Naive thymus-derived CD8-positive, alpha-beta T cell (primary cell): ENCODE measurements at regions of chr16 and their contacts with region 1.

Region 1: DNA sequence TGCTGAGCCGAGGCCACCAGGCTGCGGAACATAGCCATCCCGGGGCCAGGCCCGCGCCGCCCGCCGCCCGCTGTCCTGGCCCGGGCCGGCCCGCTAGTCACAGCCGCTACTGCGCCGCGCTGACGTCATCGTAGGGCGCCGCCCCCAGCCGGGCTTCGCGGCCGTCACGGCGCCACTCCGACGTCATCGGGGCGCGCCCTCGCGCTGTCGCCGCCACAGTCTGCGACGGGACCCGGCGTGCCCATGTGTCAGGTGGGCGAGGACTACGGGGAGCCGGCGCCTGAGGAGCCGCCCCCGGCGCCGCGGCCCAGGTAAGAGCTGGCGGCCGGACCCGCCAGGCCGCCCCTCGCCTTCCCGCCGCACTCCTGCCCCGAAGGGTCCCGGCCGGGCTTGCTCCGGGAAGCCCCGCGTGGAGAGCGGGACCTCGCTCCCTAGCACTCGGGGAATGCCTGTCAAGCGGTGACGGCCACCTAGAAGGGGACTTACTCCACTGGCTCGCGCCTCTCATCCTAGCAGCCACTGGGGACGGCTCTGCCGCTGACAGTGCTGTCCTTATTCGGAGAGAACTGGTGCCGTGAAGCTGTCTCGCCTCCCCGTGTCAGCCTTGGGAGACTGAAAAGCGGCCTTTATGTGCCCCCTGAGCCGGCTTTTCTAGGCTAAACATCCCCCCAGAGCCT is at the starts of genes CTU2 and RNF166:
- DNase-seq: peak; percentile 86 to 95 (median 92)
- ATAC-seq: peak; percentile 62 to 73
- H3K4me3 Mint-ChIP-seq: peak within 1 kb of the TSS; percentile 93 to 99 (median 96)
- H3K27ac Mint-ChIP-seq: peak within 1 kb of the TSS; percentile 88 to 100 (median 96)
- H3K4me1 Mint-ChIP-seq: peaks cover 22 to 58% (median 56%) of the 10 kb centered on the region in 4 donors
- H3K27me3 Mint-ChIP-seq: no peaks in the 10 kb centered on the region
- polyA plus RNA-seq, gene CTU2: 16.9 to 21.9 (median 19.0) TPM
- polyA plus RNA-seq, gene RNF166: 79.4 to 104 (median 101) TPM

Region 2: GRCh38 chr16:88662843-88663606 is 43.4 kb before region 1 on chr16 and contains the start of gene MVD:
- POLR2A ChIA-PET with region 1: interaction called, 67 read pairs
- DNase-seq: peak; percentile 90 to 98 (median 94)
- ATAC-seq: peak; percentile 97
- H3K4me3 Mint-ChIP-seq: peak within 1 kb of the TSS; percentile 90 to 97 (median 94)
- H3K27ac Mint-ChIP-seq: peak within 1 kb of the TSS; percentile 58 to 98 (median 96)
- H3K4me1 Mint-ChIP-seq: peaks cover 5 to 31% (median 18%) of the 10 kb centered on the region in 4 donors
- H3K27me3 Mint-ChIP-seq: peaks cover 0 to 2% (median 0%) of the 10 kb centered on the region in 5 donors
- polyA plus RNA-seq, gene MVD: 14.4 to 20.4 (median 18.5) TPM

Region 3: DNA sequence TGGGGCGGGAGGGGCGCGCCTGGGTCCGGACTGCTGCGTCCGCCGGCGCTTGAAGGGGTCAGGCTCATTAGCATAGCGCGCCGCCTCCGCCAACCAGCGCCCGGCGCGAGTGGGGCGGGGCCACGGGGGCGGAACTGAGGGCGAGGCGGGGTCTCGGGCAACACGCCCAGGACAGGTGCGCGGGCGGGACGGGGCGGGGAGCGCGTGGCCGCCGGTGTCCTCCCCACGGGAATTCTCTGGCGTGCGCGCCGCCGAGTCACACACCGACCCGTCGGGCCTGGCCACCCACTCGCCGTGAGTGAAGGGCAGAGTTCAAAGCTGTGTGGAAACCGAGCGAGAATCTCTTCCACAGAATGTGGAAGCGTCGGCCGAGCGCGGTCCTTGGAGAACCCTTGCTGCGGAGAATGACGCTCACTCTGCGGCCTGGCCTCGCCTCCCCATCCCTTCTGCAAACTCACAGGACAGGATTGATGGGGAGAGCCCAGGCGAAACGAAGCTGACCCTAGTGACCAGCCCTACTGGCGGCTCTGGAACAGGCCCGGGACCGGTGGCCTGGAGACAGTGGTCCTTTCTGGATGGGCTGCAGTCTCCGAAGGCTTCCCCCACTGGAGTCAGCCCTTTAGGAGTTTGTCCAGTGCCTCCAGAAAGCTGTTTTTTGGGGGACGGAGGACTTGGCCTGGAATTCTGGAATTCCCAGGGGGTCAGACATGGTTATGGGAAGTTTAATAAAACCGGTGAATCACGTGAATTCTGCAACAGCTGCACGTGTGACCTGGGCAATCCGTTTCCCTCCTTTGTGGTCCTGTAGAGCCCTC is 19.8 kb before region 1 on chr16 and contains the start of gene SNAI3:
- POLR2A ChIA-PET with region 1: interaction called, 100 read pairs
- DNase-seq: peak; percentile 59 to 87 (median 77)
- ATAC-seq: peak; percentile 74
- H3K4me3 Mint-ChIP-seq: peak within 1 kb of the TSS; percentile 75 to 90 (median 82)
- H3K27ac Mint-ChIP-seq: peak within 1 kb of the TSS in 9 of 10 donors; percentile 37 to 89 (median 73)
- H3K4me1 Mint-ChIP-seq: peaks cover 12 to 64% (median 45%) of the 10 kb centered on the region in 4 donors
- H3K27me3 Mint-ChIP-seq: no peaks in the 10 kb centered on the region
- polyA plus RNA-seq, gene SNAI3: 3.3 to 6.1 (median 5.3) TPM

Region 4: DNA sequence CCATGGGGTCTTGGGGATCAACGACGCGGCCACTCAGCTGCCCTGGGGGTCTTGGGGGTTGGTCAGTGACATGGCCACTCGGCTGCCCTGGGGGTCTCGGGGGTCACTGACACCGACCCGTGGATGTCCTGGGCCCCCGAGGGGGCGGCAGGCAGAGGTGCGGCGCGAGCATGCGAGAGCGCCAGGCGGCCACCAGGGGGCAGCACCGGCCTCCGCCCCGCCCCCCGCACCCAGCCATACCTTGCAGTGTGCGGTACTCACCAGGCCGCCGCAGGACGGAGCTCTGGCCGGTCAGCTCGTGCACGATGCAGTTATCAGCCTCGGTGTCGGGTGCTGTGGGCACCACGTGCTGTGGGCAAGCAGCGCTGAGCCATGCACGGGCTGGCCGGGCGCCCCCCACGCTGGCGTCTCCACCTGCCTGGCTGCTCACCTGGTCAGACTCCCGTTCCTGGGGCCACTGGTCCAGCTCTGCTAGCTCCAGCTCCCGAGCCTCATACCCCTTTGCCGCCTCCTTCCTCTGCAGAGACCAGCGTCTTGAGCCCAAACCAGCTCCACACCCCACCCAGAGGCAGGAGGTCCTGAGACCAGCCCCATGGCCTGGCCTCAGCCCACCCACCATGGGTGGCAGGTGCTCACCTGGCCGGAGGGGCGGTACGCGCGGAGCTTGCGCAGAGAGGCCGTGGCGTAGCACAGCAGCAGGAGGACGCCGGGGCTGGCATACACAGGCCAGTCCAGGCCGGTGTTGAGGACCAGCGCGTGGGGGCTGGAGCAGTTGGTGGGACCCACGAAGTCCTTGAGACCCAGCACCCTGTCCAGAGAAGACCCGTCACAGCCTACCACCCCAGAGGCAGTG is 31.1 kb after region 1 on chr16:
- POLR2A ChIA-PET with region 1: interaction called, 11 read pairs
- DNase-seq: peak; percentile 56 to 90 (median 72)
- ATAC-seq: peak; percentile 93 to 98
- H3K4me3 Mint-ChIP-seq: no peak overlapping the region
- H3K27ac Mint-ChIP-seq: no peak overlapping the region
- H3K4me1 Mint-ChIP-seq: peaks cover 0 to 3% (median under 1%) of the 10 kb centered on the region in 4 donors
- H3K27me3 Mint-ChIP-seq: no peaks in the 10 kb centered on the region

Region 5: GRCh38 chr16:88769617-88770460 is 63.4 kb after region 1 on chr16:
- POLR2A ChIA-PET with region 1: no interaction called
- DNase-seq: peak in 1 of 10 donors; percentile 28
- ATAC-seq: peak in 1 of 2 donors; percentile 31
- H3K4me3 Mint-ChIP-seq: peak overlapping the region in 5 of 10 donors; percentile 18 to 68 (median 56)
- H3K27ac Mint-ChIP-seq: peak overlapping the region in 4 of 10 donors; percentile 38 to 69 (median 56)
- H3K4me1 Mint-ChIP-seq: peaks cover 8 to 39% (median 35%) of the 10 kb centered on the region in 4 donors
- H3K27me3 Mint-ChIP-seq: no peaks in the 10 kb centered on the region

Region 6: DNA sequence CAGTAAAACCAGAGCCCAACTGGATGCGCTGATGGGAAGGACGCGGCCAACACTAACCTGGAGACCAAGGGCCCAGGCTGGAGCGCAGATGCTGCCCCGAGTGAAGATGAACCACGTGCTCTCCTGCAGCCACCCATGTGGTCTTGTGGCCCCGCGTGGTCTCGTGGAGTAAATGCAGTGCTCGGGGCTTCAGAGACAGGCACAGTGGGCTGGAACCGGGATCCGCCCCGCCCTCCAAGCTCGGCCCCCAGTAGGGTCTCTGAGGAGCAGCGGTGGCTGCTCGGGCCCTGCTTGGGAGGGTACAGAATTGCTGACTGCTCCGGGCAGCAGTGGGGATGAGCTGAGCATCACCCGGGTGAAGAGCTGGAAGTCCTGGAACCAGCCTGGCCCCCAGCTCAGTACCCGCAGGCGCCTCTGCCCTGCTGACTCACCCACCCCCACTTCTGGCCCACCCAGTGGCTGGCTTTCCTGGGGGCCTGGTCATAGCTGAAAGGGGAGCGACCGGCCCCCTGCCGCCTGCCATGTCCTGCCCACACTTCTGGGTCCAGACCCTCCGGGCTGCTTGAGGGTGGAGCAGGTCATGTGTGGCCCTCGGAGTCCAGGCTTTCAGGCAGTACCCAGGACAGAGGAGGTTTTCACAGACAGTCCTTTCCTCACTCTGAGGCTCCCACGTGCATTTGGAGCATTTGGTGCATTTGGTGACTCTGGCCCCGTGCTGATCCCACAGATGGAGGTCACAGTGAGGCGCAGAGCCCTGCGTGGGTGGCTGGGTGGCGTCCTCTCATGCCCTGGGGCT is 85.5 kb after region 1 on chr16:
- POLR2A ChIA-PET with region 1: interaction called, 14 read pairs
- DNase-seq: no peak
- ATAC-seq: peak; percentile 28 to 33
- H3K4me3 Mint-ChIP-seq: peak overlapping the region in 8 of 10 donors; percentile 44 to 71 (median 56)
- H3K27ac Mint-ChIP-seq: peak overlapping the region in 9 of 10 donors; percentile 53 to 93 (median 80)
- H3K4me1 Mint-ChIP-seq: peaks cover 15 to 65% (median 56%) of the 10 kb centered on the region in 4 donors
- H3K27me3 Mint-ChIP-seq: no peaks in the 10 kb centered on the region